CD4-positive, alpha-beta memory T cell (primary cell): ENCODE measurements at regions of chr18 and their contacts with region 1.

Region 1: DNA sequence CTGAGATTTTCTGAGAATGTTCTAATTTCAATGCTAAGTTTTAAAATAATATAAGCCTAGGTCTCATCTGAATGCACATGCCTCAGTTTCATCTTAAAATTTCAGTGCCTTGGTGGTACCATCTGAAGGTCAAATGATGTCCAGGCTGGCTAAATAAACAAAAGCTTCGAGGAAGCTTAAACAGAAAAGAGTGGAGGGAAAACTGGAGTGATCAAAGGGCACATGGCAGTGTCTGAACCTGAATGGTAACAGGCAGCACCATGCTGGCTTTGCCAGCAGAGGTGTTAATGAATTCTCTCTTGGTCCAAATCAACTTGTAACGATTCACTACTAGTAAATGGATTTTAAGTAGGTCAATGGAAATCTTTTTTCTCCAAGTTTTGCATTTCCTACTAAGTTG is 158.4 kb upstream of the MEX3C start:
- DNase-seq: no peak
- H3K4me3 ChIP-seq: no peak overlapping the region
- H3K4me3 Mint-ChIP-seq: no peak overlapping the region
- H3K27ac ChIP-seq: no peak overlapping the region
- H3K27ac Mint-ChIP-seq: no peak overlapping the region
- H3K4me1 ChIP-seq: no peaks in the 10 kb centered on the region
- H3K4me1 Mint-ChIP-seq: no peaks in the 10 kb centered on the region
- H3K27me3 ChIP-seq: no peaks in the 10 kb centered on the region
- H3K27me3 Mint-ChIP-seq: peaks cover 4 to 16% of the 10 kb centered on the region in 2 donors

Region 2: GRCh38 chr18:51290860-51291259 is 65.0 kb before region 1 on chr18:
- CTCF ChIA-PET with region 1: no interaction called
- POLR2A ChIA-PET with region 1: no interaction called
- intact Hi-C with region 1: loop called (anchors 2 kb)
- DNase-seq: no peak
- H3K4me3 ChIP-seq: no peak overlapping the region
- H3K4me3 Mint-ChIP-seq: no peak overlapping the region
- H3K27ac ChIP-seq: no peak overlapping the region
- H3K27ac Mint-ChIP-seq: no peak overlapping the region
- H3K4me1 ChIP-seq: no peaks in the 10 kb centered on the region
- H3K4me1 Mint-ChIP-seq: no peaks in the 10 kb centered on the region
- H3K27me3 ChIP-seq: no peaks in the 10 kb centered on the region
- H3K27me3 Mint-ChIP-seq: peaks cover 5 to 7% of the 10 kb centered on the region in 2 donors

Region 3: DNA sequence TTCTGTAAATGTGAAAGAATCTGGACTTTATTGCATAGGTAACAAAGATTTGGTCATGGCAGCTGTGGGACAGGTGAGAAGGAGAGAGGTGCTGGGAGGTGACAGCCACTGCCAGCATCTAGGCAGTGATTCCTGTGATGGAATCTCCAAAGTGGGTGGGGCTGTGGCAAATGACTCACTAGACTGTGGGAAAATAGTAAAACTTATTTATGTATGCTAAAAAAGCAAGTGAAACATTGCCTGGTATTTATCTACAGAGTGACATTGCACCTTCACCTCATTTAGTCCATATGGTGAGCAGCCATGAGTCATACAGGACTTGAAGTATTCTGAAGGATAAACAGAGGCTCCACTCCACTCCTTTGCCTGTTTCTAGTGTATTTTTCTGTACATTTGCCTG is 13.0 kb before region 1 on chr18:
- CTCF ChIA-PET with region 1: no interaction called
- POLR2A ChIA-PET with region 1: no interaction called
- intact Hi-C with region 1: no loop called
- DNase-seq: no peak
- H3K4me3 ChIP-seq: no peak overlapping the region
- H3K4me3 Mint-ChIP-seq: no peak overlapping the region
- H3K27ac ChIP-seq: no peak overlapping the region
- H3K27ac Mint-ChIP-seq: no peak overlapping the region
- H3K4me1 ChIP-seq: no peaks in the 10 kb centered on the region
- H3K4me1 Mint-ChIP-seq: no peaks in the 10 kb centered on the region
- H3K27me3 ChIP-seq: peaks cover 3% of the 10 kb centered on the region
- H3K27me3 Mint-ChIP-seq: peaks cover 2 to 3% of the 10 kb centered on the region in 2 donors

Region 4: GRCh38 chr18:51751901-51752300 is 396.1 kb after region 1 on chr18:
- CTCF ChIA-PET with region 1: no interaction called
- POLR2A ChIA-PET with region 1: no interaction called
- intact Hi-C with region 1: no loop called
- DNase-seq: no peak
- H3K4me3 ChIP-seq: no peak overlapping the region
- H3K4me3 Mint-ChIP-seq: no peak overlapping the region
- H3K27ac ChIP-seq: no peak overlapping the region
- H3K27ac Mint-ChIP-seq: no peak overlapping the region
- H3K4me1 ChIP-seq: no peaks in the 10 kb centered on the region
- H3K4me1 Mint-ChIP-seq: no peaks in the 10 kb centered on the region
- H3K27me3 ChIP-seq: no peaks in the 10 kb centered on the region
- H3K27me3 Mint-ChIP-seq: no peaks in the 10 kb centered on the region